Posterior vena cava (tissue), 2 donors: ENCODE measurements at regions of chr3 and their contacts with region 1.

Region 1: GRCh38 chr3:44284949-44285348 is 43.3 kb downstream of the TOPAZ1 start:
- DNase-seq: no peak

Region 2: DNA sequence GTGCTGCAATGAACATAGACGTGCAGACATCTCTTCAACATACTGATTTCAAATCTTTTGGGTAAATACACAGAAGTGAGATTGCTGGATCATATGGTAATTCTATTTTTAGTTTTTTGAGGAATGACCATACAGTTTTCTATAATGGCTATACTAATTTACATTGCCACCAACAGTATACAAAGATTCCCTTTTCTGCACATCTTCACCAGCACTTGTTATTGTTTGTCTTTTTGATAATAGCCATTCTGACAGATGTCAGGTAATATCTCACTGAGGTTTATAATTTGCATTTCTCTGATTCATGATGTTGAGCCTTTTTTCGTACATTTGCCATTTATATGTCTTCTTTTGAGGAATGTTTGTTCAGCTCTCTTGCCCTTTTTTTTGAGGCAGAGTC is 12.8 kb before region 1 on chr3:
- intact Hi-C with region 1: loop called in 1 of 2 experiments (anchors 1 kb)
- DNase-seq: no peak

Region 3: DNA sequence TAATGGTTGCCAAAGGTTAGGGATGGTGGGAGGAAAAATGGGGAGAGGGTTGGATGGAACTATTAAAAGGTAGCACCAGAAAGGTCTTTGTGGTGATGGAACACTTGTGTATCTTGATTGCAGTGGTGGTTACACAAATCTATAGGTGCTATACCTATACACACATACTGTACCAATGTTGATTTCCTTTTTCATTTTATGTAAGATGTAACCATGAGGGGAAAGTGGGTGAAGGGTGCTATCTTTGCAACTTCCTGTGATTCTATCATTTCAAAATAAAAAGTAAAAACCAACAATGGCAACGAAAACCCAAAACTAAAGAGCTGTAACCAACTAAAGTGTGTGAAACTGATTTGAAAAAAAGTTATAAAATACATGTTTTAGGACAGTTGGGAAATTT is 362.8 kb after region 1 on chr3:
- intact Hi-C with region 1: no loop called
- DNase-seq: no peak